ENCODE measurements at regions of chr6 and their contacts with region 1.

Region 1: DNA sequence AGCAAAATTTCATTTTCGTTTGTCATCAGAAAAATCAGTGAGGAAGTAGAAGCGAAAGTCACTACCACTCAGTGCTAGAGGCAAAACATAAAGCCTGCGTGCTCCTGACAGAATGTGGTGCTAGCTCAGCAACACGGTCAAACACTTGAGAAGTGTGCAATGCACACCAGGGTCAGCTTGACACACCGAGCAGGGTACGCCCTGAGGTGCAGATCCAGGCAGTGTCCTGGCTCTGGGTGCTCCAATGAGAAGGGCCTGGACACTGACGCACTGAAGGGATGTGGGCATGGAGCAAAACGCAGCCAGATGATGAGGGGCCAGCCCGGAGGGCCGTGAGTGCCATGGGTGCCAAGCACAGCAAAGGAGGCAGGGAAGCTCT is 5.9 kb downstream of the RNASET2 start:
- DNase-seq: peak; percentile 26
- ATAC-seq: peak; percentile 26
- H3K4me3 Mint-ChIP-seq: peak overlapping the region; percentile 84
- H3K27ac Mint-ChIP-seq: peak overlapping the region; percentile 95
- H3K4me1 Mint-ChIP-seq: peaks cover 71% of the 10 kb centered on the region
- H3K27me3 Mint-ChIP-seq: no peaks in the 10 kb centered on the region
- CTCF ChIP-seq: no peak

Region 2: GRCh38 chr6:166286839-166287271 is 663.6 kb before region 1 on chr6:
- CTCF ChIA-PET with region 1: no interaction called
- POLR2A ChIA-PET with region 1: no interaction called
- intact Hi-C with region 1: no loop called
- DNase-seq: peak; percentile 30
- ATAC-seq: peak; percentile 94
- H3K4me3 Mint-ChIP-seq: peak overlapping the region; percentile 76
- H3K27ac Mint-ChIP-seq: peak overlapping the region; percentile 93
- H3K4me1 Mint-ChIP-seq: peaks cover 20% of the 10 kb centered on the region
- H3K27me3 Mint-ChIP-seq: peaks cover 9% of the 10 kb centered on the region
- CTCF ChIP-seq: no peak

Region 3: DNA sequence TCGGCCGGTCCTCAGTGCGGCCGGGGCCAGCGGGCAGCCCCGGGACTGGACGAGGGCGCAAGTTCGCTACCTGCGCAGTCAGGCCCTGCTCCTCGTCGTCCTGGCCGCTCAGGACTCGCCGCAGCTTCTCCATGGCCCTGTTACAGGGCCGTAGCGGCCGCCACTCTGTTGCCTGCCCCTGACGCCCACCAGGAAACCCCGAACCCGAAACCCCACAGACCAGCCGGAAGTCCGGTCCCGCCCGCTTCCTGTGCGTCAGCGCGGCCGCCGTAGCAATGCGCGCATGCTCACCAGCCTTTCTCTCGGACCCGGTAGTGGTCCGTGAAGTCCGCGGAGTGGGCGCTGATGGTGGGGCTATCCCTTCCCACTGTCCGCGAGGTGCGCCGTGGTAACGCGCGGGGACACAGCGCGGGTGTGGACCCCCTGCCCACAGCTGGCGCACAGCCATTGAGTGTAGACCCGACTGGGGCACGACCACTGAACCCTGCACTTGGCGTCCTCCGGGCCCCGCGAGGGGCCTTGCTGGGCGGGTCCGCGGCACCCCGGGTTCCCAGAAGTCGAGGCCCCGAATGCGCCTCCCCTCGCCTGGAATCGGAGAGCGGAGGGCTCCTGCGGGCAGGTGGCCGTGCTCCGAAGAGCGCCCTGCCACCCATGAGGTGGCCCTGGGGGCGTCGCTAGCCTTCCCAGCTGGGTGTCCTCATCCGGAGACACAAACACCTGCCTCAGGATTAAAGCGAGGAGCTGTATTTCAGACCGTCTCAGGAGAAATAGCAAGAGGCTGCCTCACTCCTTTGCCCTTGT is 607.9 kb before region 1 on chr6 and contains the start of gene SFT2D1:
- CTCF ChIA-PET with region 1: no interaction called
- POLR2A ChIA-PET with region 1: no interaction called
- intact Hi-C with region 1: loop called (anchors 2 kb)
- DNase-seq: peak; percentile 84
- ATAC-seq: peak; percentile 77
- H3K4me3 Mint-ChIP-seq: peak within 1 kb of the TSS; percentile 92
- H3K27ac Mint-ChIP-seq: peak within 1 kb of the TSS; percentile 89
- H3K4me1 Mint-ChIP-seq: peaks cover 16% of the 10 kb centered on the region
- H3K27me3 Mint-ChIP-seq: no peaks in the 10 kb centered on the region
- CTCF ChIP-seq: no peak
- total RNA-seq, gene SFT2D1: 44.6 and 49.5 TPM in 2 replicates

Region 4: DNA sequence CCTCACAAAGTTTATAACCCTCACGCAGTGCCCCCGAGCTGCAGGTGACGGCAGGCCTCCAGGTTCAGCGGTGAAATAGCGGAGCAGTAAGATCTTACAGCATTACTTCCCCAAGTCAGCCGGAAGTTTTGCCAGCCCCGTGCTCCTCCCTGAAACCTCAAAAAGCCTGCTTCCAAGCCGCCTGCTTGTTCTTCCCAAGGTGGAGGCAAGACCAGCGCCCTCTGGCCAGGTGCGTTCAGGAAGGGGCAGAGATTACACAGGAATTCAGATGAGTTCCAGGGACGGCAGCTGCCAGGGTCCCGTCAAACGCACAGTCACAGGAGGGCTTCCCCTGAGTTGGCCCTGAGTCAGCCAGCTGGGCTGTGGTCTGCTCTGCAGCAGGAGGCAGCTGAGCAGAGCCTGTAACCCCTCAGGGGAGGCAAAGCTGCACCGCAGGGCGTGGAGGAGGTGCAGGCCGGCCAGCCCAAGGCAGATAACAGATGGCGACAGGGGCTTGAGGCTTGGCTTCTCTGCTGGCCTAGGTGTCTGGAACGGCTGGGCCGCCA is 199.3 kb before region 1 on chr6:
- CTCF ChIA-PET with region 1: no interaction called
- POLR2A ChIA-PET with region 1: interaction called, 4 read pairs
- intact Hi-C with region 1: loop called (anchors 1 kb)
- DNase-seq: peak; percentile 63
- ATAC-seq: peak; percentile 99
- H3K4me3 Mint-ChIP-seq: peak overlapping the region; percentile 85
- H3K27ac Mint-ChIP-seq: peak overlapping the region; percentile 80
- H3K4me1 Mint-ChIP-seq: peaks cover 28% of the 10 kb centered on the region
- H3K27me3 Mint-ChIP-seq: peaks cover 10% of the 10 kb centered on the region
- CTCF ChIP-seq: no peak

Region 5: GRCh38 chr6:166775180-166776081 is 175.0 kb before region 1 on chr6:
- CTCF ChIA-PET with region 1: no interaction called
- POLR2A ChIA-PET with region 1: no interaction called
- intact Hi-C with region 1: no loop called
- DNase-seq: no peak
- ATAC-seq: peak; percentile 60
- H3K4me3 Mint-ChIP-seq: no peak overlapping the region
- H3K27ac Mint-ChIP-seq: no peak overlapping the region
- H3K4me1 Mint-ChIP-seq: no peaks in the 10 kb centered on the region
- H3K27me3 Mint-ChIP-seq: peaks cover 13% of the 10 kb centered on the region
- CTCF ChIP-seq: peak; percentile 45

Region 6: DNA sequence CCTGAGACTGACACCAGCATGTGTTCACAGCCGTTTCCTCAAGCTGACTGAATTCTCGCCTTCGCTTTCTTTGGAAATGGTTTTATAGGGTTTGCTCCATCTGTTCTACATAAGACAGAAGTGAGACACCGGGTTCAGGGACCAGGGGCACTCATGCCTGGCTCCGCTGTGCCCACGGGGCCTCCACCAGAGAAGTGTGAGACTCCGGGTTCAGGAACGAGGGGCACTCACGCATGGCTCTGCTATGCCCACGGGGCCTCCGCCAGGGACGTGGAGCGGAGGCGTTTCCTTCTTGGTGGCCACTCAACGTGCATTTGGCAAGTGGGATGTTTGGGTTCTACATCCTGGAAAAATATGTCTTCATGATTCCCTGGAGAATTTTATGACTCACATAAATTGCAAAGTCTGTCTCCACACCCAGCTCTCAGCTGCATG is 100.7 kb before region 1 on chr6:
- CTCF ChIA-PET with region 1: interaction called, 3 read pairs
- POLR2A ChIA-PET with region 1: interaction called, 5 read pairs
- intact Hi-C with region 1: loop called (anchors 5 kb)
- DNase-seq: peak; percentile 46
- ATAC-seq: peak; percentile 92
- H3K4me3 Mint-ChIP-seq: peak overlapping the region; percentile 47
- H3K27ac Mint-ChIP-seq: peak overlapping the region; percentile 47
- H3K4me1 Mint-ChIP-seq: peaks cover 70% of the 10 kb centered on the region
- H3K27me3 Mint-ChIP-seq: no peaks in the 10 kb centered on the region
- CTCF ChIP-seq: no peak

Region 7: DNA sequence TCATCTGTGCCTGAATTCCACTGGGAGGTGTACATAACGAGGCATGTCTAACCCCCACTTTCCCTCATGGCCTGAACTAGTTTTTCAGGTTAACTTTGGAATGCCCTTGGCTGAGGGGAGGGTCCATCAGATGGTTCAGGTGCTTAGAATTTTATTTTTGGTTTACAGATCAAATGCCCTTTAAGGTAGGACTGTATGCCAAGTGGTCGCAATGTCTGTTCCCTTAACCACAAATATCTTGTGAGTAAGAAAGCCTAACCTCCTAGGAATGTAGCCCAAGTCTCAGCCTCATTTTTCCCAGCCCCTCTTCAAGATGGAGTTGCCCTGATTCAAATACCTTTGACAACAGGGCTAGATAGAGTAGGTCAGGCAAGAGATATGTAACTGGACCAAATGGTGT is 72.5 kb before region 1 on chr6:
- CTCF ChIA-PET with region 1: no interaction called
- POLR2A ChIA-PET with region 1: no interaction called
- intact Hi-C with region 1: no loop called
- DNase-seq: no peak
- ATAC-seq: no peak
- H3K4me3 Mint-ChIP-seq: no peak overlapping the region
- H3K27ac Mint-ChIP-seq: no peak overlapping the region
- H3K4me1 Mint-ChIP-seq: no peaks in the 10 kb centered on the region
- H3K27me3 Mint-ChIP-seq: no peaks in the 10 kb centered on the region
- CTCF ChIP-seq: no peak

Region 8: DNA sequence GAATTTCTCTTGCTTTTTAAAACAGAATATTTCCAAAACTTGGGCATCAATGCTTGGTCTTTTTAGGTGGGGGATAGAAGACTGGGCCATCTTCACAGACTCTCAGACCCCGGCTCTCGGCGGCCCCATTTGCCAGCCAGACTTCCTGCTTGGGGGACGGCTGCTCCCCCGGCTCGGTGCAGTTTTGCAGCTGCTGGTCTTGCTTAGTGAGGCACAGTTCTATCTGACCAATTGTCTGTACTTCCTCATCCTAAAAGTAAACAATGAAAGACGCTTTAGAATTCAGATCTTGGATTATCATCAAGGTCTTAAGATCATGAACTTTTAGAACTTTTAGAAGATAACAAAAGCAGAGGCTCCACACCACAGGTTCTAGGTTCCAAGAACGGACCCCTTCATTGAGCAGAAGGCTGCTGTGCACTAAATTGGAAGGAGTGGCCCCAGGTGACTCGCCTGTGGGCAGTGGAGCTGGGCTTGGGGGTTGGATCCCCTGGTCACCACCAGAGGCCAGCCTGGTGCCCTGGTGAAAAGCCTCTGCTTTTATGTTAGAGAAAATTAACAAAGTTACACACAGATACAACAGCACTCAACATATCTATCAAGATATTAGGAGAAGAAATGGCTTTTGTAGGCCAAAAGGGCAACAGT is 20.8 kb before region 1 on chr6:
- CTCF ChIA-PET with region 1: interaction called, 4 read pairs
- POLR2A ChIA-PET with region 1: interaction called, 4 read pairs
- intact Hi-C with region 1: loop called (anchors 2 kb)
- DNase-seq: no peak
- ATAC-seq: peak; percentile 76
- H3K4me3 Mint-ChIP-seq: peak overlapping the region; percentile 38
- H3K27ac Mint-ChIP-seq: peak overlapping the region; percentile 92
- H3K4me1 Mint-ChIP-seq: peaks cover 37% of the 10 kb centered on the region
- H3K27me3 Mint-ChIP-seq: no peaks in the 10 kb centered on the region
- CTCF ChIP-seq: no peak

Region 9: GRCh38 chr6:167031082-167031709 is 80.8 kb after region 1 on chr6:
- CTCF ChIA-PET with region 1: no interaction called
- POLR2A ChIA-PET with region 1: no interaction called
- intact Hi-C with region 1: no loop called
- DNase-seq: no peak
- ATAC-seq: no peak
- H3K4me3 Mint-ChIP-seq: no peak overlapping the region
- H3K27ac Mint-ChIP-seq: peak overlapping the region; percentile 4
- H3K4me1 Mint-ChIP-seq: peaks cover 9% of the 10 kb centered on the region
- H3K27me3 Mint-ChIP-seq: no peaks in the 10 kb centered on the region
- CTCF ChIP-seq: no peak

Region 10: GRCh38 chr6:167093922-167094432 is 143.5 kb after region 1 on chr6:
- CTCF ChIA-PET with region 1: interaction called, 4 read pairs
- POLR2A ChIA-PET with region 1: interaction called, 113 read pairs
- intact Hi-C with region 1: loop called (anchors 1 kb)
- DNase-seq: peak; percentile 84
- ATAC-seq: peak; percentile 48
- H3K4me3 Mint-ChIP-seq: peak overlapping the region; percentile 94
- H3K27ac Mint-ChIP-seq: peak overlapping the region; percentile 100
- H3K4me1 Mint-ChIP-seq: peaks cover 100% of the 10 kb centered on the region
- H3K27me3 Mint-ChIP-seq: no peaks in the 10 kb centered on the region
- CTCF ChIP-seq: no peak

Region 11: GRCh38 chr6:167153521-167153959 is 203.1 kb after region 1 on chr6:
- CTCF ChIA-PET with region 1: interaction called, 4 read pairs
- POLR2A ChIA-PET with region 1: interaction called, 8 read pairs
- intact Hi-C with region 1: loop called (anchors 1 kb)
- DNase-seq: no peak
- ATAC-seq: peak; percentile 62
- H3K4me3 Mint-ChIP-seq: peak overlapping the region; percentile 88
- H3K27ac Mint-ChIP-seq: peak overlapping the region; percentile 88
- H3K4me1 Mint-ChIP-seq: peaks cover 58% of the 10 kb centered on the region
- H3K27me3 Mint-ChIP-seq: no peaks in the 10 kb centered on the region
- CTCF ChIP-seq: no peak

Measured in activated B cell treated with CpG ODN at 0.5 μM for 24 hours (primary cell).